Colonic mucosa (tissue), 4 donors: ENCODE measurements at regions of chr5 and their contacts with region 1.

Region 1: DNA sequence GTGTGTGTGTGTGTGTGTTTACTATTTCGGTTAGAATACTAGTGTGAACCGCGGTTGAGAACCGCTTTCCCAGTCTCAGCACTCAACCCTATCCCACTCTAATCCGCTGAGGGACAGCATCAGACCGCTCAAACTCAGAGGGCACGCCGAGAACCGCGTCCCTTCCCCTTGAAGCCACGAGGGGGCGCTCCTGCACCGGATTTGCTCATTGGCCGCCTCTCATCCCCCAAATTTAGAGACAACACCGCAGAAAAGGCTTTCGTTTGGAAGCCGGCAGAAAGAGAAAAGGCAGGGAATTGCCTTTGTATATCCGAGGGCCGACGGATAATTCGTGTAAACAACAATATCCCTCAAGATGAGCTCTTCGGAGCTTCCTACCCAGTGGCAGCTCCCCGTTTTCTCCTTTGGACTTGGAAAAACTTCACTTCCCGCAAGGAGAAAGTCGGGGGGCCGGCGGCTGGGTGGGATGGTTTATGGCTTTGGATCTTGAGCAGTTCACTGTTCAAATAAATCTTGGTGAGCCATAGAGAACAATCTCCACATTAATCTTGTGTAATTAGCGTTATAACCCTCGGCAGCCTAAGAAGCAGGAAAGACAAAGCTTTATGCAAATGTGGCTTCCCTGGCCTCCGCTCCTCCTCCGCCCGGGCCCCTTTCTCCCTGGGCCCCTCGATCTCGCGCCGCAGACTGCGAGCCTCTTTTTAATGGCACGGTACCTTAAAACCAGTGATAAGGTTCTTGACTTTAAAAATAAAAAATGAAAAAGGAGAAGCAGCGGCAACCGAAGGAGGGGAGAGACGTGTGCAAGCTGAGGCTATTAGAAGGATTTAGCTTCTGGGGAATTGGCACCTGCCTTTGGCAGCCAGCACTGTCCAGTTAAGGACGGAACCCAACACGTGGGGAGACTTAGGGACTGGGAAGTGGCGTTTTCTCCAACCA is 296.8 kb downstream of the PARP8 start:
- DNase-seq: peak; percentile 82
- H3K4me3 ChIP-seq: peak overlapping the region; percentile 34
- H3K27ac ChIP-seq: no peak overlapping the region
- H3K4me1 ChIP-seq: no peaks in the 10 kb centered on the region
- H3K27me3 ChIP-seq: peaks cover 37% of the 10 kb centered on the region
- CTCF ChIP-seq: peak; percentile 82

Region 2: DNA sequence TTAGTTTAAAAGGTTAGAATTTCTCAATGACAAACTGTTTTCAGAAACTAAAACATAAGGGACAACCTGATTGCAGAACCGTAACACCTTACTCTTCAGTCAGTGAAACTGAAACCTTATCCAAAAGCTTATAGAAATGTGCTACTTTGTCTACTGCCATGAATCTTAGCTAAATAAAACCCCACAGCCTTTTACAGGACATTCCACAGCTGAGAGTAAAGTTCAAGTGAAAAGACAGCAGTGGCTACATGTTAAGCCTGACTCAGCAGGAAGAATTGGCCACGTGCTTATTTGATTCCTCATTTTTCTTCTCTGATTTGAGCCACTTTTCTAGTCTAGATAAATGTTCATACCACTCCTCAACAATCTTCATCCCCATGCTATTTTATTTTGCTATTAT is 141.4 kb after region 1 on chr5:
- intact Hi-C with region 1: no loop called
- DNase-seq: no peak
- H3K4me3 ChIP-seq: no peak overlapping the region
- H3K27ac ChIP-seq: no peak overlapping the region
- H3K4me1 ChIP-seq: no peaks in the 10 kb centered on the region
- H3K27me3 ChIP-seq: no peaks in the 10 kb centered on the region
- CTCF ChIP-seq: no peak

Region 3: GRCh38 chr5:51378448-51379330 is 415.5 kb after region 1 on chr5:
- intact Hi-C with region 1: loop called (anchors 5 kb)
- DNase-seq: no peak
- H3K4me3 ChIP-seq: no peak overlapping the region
- H3K27ac ChIP-seq: no peak overlapping the region
- H3K4me1 ChIP-seq: no peaks in the 10 kb centered on the region
- H3K27me3 ChIP-seq: peaks cover 52% of the 10 kb centered on the region
- CTCF ChIP-seq: no peak

Region 4: GRCh38 chr5:52007230-52007858 is 1044.1 kb after region 1 on chr5:
- intact Hi-C with region 1: loop called (anchors 2 kb)
- DNase-seq: peak; percentile 26
- H3K4me3 ChIP-seq: no peak overlapping the region
- H3K27ac ChIP-seq: no peak overlapping the region
- H3K4me1 ChIP-seq: no peaks in the 10 kb centered on the region
- H3K27me3 ChIP-seq: no peaks in the 10 kb centered on the region
- CTCF ChIP-seq: peak; percentile 51

Region 5: DNA sequence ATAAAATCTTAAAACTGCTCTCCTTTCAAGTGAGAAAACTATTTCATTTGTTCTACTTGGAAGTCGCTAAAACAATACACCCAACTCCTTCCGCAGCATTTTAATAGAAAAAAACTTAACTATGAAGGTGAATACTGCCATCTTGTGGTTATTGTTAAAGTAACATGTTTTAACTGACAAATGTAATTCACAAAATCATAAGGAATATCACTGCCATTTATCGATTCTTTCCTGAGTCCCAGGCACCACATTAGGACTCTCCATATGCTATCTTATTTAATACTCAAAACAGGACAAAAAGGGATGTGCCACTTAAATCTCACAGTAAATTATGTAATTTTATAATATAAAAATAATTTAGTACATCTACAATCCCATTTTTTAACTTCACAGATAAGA is 1694.0 kb after region 1 on chr5:
- intact Hi-C with region 1: loop called (anchors 10 kb)
- DNase-seq: no peak
- H3K4me3 ChIP-seq: no peak overlapping the region
- H3K27ac ChIP-seq: no peak overlapping the region
- H3K4me1 ChIP-seq: no peaks in the 10 kb centered on the region
- H3K27me3 ChIP-seq: no peaks in the 10 kb centered on the region
- CTCF ChIP-seq: peak; percentile 30